HepG2 (cell line): ENCODE measurements at regions of chr17 and their contacts with region 1.

Region 1: DNA sequence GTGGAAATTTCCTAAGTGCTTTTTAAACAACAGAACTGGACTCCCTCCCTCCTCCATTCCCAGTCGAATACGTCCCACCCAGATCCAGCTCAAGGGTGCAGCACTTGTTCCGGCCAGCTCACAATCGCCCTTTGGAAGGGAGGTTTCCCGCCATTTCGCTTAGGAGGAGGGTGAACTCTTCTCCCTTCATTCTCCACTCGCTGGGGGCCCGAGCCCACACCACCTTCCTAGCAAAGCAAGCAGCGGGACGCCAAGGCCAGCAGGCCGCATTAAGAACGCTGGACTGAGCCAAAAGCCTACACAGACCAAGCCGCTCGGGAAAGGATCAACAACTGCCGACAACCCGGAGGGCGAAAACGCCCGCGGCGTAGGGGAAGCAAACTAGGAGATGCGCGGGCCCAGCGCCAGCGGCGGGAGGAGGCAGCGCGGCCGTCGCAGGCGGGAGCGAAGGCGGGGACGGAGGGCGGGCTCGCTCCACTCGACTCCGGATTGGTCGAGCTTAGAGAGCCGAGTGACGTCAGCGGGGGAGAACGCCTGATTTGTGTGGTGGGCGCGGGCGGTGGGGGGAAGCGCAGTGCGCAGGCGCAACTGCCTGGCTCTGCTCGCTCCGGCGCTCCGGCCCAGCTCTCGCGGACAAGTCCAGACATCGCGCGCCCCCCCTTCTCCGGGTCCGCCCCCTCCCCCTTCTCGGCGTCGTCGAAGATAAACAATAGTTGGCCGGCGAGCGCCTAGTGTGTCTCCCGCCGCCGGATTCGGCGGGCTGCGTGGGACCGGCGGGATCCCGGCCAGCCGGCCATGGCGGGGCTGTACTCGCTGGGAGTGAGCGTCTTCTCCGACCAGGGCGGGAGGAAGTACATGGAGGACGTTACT is at the start of gene PPM1D:
- DNase-seq: peak; percentile 99
- ATAC-seq: peak; percentile 89
- H3K4me3 ChIP-seq: peak within 1 kb of the TSS; percentile 86 to 99 (median 98)
- H3K27ac ChIP-seq: peak within 1 kb of the TSS; percentile 98
- H3K4me1 ChIP-seq: peaks cover 31% of the 10 kb centered on the region
- H3K27me3 ChIP-seq: no peaks in the 10 kb centered on the region; a peak in 1 of 5 replicates
- CTCF ChIP-seq: peak; percentile 38
- EP300 ChIP-seq: peak; percentile 21 to 34; a peak in 2 of 4 replicates
- POLR2A ChIP-seq: peak; percentile 84 to 88
- RAD21 ChIP-seq: peak; percentile 60
- total RNA-seq, gene PPM1D: 26.2 and 32.3 TPM in 2 replicates

Region 2: DNA sequence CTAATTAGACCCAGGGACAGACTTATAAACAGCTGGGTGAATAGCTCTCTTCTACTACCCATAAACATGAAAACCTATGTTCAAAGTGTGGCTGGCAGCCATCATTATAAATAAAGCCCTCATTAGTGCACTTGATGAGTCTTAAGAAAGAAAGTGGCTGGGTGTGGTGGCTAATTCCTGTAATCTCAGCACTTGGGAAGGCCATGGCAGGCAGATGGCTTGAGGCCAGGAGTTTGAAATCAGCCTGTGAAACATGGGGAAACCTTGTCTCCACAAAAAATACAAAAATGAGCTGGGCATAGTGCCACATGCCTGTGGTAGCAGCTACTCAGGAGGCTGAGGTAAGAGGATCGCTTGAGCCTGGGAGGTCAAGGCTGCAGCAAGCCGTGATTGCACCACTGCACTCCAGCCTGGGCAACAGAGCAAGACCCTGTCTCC is 45.5 kb before region 1 on chr17:
- CTCF ChIA-PET with region 1: no interaction called
- POLR2A ChIA-PET with region 1: interaction called, 42 read pairs
- in situ Hi-C with region 1: no loop called
- intact Hi-C with region 1: no loop called
- DNase-seq: no peak
- ATAC-seq: no peak
- H3K4me3 ChIP-seq: no peak overlapping the region
- H3K27ac ChIP-seq: no peak overlapping the region
- H3K4me1 ChIP-seq: peaks cover 17% of the 10 kb centered on the region
- H3K27me3 ChIP-seq: no peaks in the 10 kb centered on the region
- CTCF ChIP-seq: no peak
- EP300 ChIP-seq: no peak
- POLR2A ChIP-seq: no peak
- RAD21 ChIP-seq: no peak

Region 3: DNA sequence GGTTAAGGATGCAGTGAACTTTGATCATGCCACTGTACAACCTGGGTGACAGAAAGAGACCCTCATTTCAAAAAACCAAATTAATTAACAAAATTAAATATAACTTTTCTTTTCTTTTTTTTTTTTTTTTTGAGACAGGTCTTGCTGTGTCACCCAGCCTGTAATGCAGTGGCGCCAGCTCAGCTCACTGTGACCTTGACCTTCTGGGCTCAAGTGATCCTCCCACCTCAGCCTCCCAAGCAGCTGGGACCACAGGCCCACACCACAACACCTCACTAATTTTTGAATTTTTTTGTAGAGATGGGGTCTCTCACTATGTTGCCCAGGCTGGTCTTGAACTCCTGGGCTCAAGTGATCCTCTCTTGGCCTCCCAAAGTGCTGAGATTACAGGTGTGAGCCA is 31.3 kb before region 1 on chr17:
- CTCF ChIA-PET with region 1: no interaction called
- POLR2A ChIA-PET with region 1: interaction called, 11 read pairs
- in situ Hi-C with region 1: no loop called
- intact Hi-C with region 1: no loop called
- DNase-seq: peak; percentile 24
- ATAC-seq: no peak
- H3K4me3 ChIP-seq: no peak overlapping the region
- H3K27ac ChIP-seq: no peak overlapping the region
- H3K4me1 ChIP-seq: peaks cover 3% of the 10 kb centered on the region; the same call in 1 of the 2 replicates
- H3K27me3 ChIP-seq: no peaks in the 10 kb centered on the region
- CTCF ChIP-seq: no peak
- EP300 ChIP-seq: no peak
- POLR2A ChIP-seq: no peak
- RAD21 ChIP-seq: no peak

Region 4: DNA sequence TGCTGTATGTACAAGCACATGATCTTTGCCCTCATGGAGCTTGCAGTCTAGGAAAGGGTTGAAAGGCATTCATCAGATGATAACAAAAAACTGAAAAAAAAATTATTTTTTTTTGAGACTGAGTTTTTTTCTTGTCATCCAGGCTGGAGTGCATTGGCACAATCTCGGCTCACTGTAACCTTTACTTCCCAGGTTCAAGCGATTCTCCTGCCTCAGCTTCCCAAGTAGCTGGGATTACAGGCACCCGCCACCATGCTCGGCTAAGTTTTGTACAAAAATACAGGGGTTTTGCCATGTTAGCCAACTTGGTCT is 39.1 kb after region 1 on chr17:
- CTCF ChIA-PET with region 1: no interaction called
- POLR2A ChIA-PET with region 1: interaction called, 7 read pairs
- in situ Hi-C with region 1: no loop called
- intact Hi-C with region 1: loop called (anchors 2 kb)
- DNase-seq: no peak
- ATAC-seq: no peak
- H3K4me3 ChIP-seq: no peak overlapping the region
- H3K27ac ChIP-seq: no peak overlapping the region
- H3K4me1 ChIP-seq: 0 out of 2 replicates have a peak, but pooled peaks cover 8% of the 10 kb centered on the region
- H3K27me3 ChIP-seq: no peaks in the 10 kb centered on the region
- CTCF ChIP-seq: no peak
- EP300 ChIP-seq: no peak
- POLR2A ChIP-seq: no peak
- RAD21 ChIP-seq: no peak

Region 5: DNA sequence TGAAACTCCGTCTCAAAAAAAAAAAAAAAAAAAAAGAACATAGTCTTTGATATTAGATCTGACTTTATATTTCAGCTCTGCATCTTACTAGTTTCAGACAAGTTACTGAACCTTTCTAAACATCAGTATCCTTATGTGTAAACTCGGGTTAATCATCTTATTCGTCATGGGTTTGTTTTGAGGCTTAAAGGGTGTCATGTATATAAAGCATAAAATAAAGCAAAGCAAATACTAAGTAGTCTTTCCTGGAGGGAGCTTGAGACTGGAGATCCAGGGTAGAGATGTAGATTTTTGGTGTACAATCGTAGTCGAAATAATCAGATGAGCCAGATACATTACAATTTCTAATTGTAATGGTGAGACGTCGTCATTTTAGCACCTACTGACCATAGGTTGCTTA is 85.6 kb after region 1 on chr17:
- CTCF ChIA-PET with region 1: no interaction called
- POLR2A ChIA-PET with region 1: no interaction called
- in situ Hi-C with region 1: no loop called
- intact Hi-C with region 1: no loop called
- DNase-seq: no peak
- ATAC-seq: no peak
- H3K4me3 ChIP-seq: no peak overlapping the region
- H3K27ac ChIP-seq: no peak overlapping the region
- H3K4me1 ChIP-seq: no peaks in the 10 kb centered on the region
- H3K27me3 ChIP-seq: no peaks in the 10 kb centered on the region
- CTCF ChIP-seq: no peak
- EP300 ChIP-seq: no peak
- POLR2A ChIP-seq: no peak
- RAD21 ChIP-seq: no peak

Region 6: DNA sequence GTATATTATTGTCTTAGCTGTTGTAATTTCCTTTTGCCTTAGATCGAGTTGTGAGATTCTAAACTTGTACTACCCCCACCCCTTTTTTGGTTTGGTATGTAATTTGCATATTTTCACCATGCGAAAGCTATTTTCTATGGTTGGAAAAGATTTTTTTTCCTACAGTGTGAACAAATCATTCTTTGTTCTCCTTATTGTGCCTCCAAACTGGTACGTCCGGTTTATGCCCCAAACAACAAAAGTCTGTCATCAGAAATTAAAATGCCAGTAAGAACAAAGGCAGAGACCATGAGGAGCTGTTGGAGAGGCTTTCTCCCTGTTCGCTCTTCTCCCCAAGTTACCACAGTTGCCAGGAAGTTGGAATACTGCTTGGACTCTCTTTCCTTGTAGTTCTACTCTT is 143.9 kb after region 1 on chr17:
- CTCF ChIA-PET with region 1: no interaction called
- POLR2A ChIA-PET with region 1: no interaction called
- in situ Hi-C with region 1: no loop called
- intact Hi-C with region 1: no loop called
- DNase-seq: no peak
- ATAC-seq: no peak
- H3K4me3 ChIP-seq: no peak overlapping the region
- H3K27ac ChIP-seq: no peak overlapping the region
- H3K4me1 ChIP-seq: no peaks in the 10 kb centered on the region
- H3K27me3 ChIP-seq: no peaks in the 10 kb centered on the region
- CTCF ChIP-seq: no peak
- EP300 ChIP-seq: no peak
- POLR2A ChIP-seq: no peak
- RAD21 ChIP-seq: no peak

Region 7: GRCh38 chr17:60817192-60817591 is 217.3 kb after region 1 on chr17:
- CTCF ChIA-PET with region 1: no interaction called
- POLR2A ChIA-PET with region 1: no interaction called
- in situ Hi-C with region 1: no loop called
- intact Hi-C with region 1: no loop called
- DNase-seq: no peak
- ATAC-seq: no peak
- H3K4me3 ChIP-seq: no peak overlapping the region
- H3K27ac ChIP-seq: no peak overlapping the region
- H3K4me1 ChIP-seq: no peaks in the 10 kb centered on the region
- H3K27me3 ChIP-seq: no peaks in the 10 kb centered on the region
- CTCF ChIP-seq: no peak
- EP300 ChIP-seq: no peak
- POLR2A ChIP-seq: no peak
- RAD21 ChIP-seq: no peak